ENCODE measurements at regions of chr15 and their contacts with region 1.

Region 1: GRCh38 chr15:85044251-85044853 is 62.7 kb downstream of the PDE8A start:
- DNase-seq: peak; percentile 64
- ATAC-seq: peak; percentile 94
- H3K4me3 Mint-ChIP-seq: no peak overlapping the region
- H3K27ac Mint-ChIP-seq: no peak overlapping the region
- H3K4me1 Mint-ChIP-seq: peaks cover 14% of the 10 kb centered on the region; the same call in 1 of the 2 replicates
- H3K27me3 Mint-ChIP-seq: no peaks in the 10 kb centered on the region
- CTCF ChIP-seq: no peak

Region 2: DNA sequence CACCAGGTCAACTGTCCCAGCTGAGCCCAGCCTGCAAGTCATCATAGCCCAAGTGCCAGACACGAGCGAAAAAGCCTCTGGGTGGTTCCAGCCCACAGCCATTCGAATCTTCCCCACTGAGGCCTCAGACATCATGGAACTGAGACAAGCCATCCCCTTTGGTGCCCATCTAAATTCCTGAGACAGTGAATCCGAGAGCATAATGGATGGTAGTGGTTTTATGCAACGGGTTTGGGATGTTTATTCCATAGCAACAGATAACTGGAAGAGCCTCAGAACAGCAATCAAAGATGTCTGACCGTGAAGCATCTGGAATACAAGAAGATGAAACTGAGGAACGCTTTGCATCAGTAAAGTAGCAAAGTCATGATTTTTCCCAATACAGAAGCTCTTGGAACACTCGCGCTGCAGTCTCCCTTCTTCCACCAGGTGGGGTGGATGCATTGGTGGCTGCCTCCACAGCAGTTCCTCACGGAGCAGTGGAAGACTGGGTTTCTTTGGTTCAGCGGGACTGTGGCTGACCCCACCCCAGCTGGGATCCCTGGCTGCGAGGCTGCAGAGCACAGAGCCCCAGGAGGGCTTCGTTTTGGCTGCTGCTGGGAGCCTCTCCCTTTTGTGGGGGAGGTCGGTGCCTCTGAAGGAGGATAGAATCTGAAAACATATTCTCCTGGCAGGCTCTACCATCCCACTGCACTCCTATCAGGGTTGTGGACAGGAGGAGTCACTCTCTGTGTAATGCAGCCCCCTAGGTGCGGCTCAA is 89.1 kb before region 1 on chr15:
- CTCF ChIA-PET with region 1: interaction called, 17 read pairs
- POLR2A ChIA-PET with region 1: no interaction called
- DNase-seq: peak; percentile 70
- ATAC-seq: peak; percentile 96
- H3K4me3 Mint-ChIP-seq: no peak overlapping the region
- H3K27ac Mint-ChIP-seq: no peak overlapping the region
- H3K4me1 Mint-ChIP-seq: peaks cover 22% of the 10 kb centered on the region
- H3K27me3 Mint-ChIP-seq: no peaks in the 10 kb centered on the region
- CTCF ChIP-seq: no peak

Region 3: DNA sequence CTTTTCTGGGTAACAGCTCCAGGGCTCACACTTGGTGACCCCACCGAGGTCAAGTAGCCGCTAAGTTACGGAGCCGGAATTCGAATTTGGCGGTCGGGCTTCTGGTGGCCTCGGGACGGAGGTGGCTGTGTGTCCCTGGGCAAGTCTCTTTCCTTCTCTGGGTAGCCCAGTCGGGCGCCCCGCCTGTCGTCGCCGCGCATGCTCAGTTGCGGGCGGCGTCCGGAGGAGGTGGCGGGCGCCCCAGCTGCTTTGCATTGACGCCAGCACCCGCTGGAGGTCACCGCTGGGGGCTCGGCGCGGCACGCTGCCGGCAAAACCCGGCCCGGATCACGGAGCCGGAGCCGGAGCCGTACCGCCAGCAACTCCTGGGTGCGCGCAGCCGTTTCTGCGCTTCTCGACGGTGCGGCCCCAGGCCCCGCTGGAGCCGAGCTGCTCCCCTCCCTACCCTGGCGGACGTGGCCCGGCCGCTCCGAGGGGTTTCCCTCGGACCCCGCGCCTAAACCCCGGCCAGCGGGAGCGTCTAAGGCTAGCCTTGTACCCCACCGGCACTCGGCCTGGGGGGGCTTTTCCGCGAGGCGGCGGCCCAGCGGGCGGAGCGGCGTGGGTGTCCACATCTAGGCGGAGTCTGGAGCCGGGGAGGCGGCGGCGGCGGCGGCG is 63.2 kb before region 1 on chr15:
- CTCF ChIA-PET with region 1: interaction called, 14 read pairs
- POLR2A ChIA-PET with region 1: interaction called, 3 read pairs
- DNase-seq: peak; percentile 94
- ATAC-seq: peak; percentile 69
- H3K4me3 Mint-ChIP-seq: peak overlapping the region; percentile 89
- H3K27ac Mint-ChIP-seq: no peak overlapping the region; the same call in 1 of the 2 replicates
- H3K4me1 Mint-ChIP-seq: peaks cover 29% of the 10 kb centered on the region
- H3K27me3 Mint-ChIP-seq: peaks cover 54% of the 10 kb centered on the region
- CTCF ChIP-seq: no peak

Measured in WTC11 (cell line).